Ovary (tissue), 10 donors: ENCODE measurements at regions of chr7 and their contacts with region 1.

Region 1: DNA sequence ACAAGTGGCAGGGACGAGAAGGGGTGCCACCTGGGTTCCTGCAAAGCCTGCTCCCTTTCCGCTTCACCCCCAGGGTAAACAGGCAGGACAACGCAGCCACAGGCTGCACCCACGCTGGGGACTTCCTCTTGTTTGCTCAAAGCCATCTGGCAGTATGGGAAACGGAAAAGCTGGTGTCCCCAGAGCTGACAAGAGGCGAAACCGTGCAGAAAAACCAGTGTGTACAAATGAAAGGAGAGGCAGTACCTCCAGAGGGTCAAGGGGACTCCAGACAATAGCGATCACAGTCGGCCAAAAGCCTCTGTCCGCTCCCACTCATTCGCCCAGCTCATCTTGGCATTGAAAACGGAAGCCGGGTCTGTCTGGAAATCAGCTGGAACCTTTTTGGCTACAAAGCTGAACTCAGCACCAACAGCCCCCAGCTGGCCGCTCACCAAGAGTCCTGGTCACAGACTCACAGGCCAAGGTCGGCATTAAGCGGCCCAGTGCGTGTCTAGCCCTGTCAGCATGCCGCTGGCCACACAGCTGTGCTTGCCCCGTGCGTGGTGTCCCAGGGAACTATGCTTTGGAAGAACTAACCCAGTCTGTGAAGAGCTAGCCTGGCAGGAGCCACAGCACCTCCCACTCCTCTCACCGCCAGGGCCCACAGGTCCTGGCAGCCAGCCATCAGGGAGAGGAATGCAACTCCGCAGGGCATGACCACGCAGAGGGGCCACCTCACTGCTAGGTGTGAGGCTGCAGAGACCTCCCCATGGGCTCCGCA is 10.4 kb downstream of the TNS3 start:
- DNase-seq: peak; percentile 70 to 87 (median 81)
- H3K4me3 ChIP-seq: peak overlapping the region; percentile 22
- H3K27ac ChIP-seq: peak overlapping the region; percentile 72 to 77
- H3K4me1 ChIP-seq: peaks cover 52% of the 10 kb centered on the region
- H3K27me3 ChIP-seq: no peaks in the 10 kb centered on the region
- CTCF ChIP-seq: no peak
- EP300 ChIP-seq: no peak
- POLR2A ChIP-seq: no peak

Region 2: DNA sequence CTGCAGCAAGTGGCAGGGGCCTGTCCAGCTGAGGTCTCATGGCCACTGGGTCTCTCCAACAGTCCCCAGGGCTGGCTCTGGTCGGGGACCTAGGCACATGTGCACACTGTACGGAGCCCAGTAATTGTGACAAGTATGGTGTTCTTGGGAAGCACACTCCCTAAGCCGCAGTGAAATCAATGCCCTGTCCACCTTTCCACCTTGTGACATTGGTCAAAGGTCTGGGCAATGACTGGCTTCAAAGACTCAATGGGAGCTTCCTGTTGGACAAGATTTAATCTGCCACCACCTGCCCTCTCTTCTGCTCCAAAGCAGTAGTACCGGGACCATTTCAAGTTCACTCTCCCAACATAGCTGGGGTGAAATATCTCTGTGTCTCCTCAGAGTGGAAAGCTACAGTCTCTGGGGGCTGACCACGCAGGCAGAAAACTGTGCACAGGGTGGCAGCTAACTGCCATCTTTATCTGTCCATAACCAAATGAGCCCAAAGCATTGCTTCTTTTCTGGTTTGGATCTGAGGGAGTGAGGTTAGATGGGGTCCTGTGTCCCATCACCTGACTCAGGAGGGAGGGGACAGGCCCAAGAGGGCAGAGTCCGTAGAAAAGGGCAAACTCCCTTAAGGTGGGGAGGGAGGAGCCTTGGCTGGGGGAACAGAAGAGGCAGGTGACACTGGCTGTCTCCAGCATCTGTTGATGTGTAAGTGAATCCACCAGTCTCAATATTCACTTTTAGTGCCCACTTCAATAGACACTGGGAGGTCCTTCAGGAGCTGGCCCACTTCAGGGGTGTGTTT is 297.3 kb before region 1 on chr7:
- intact Hi-C with region 1: loop called in 1 of 4 experiments (anchors 10 kb)
- DNase-seq: no peak
- H3K4me3 ChIP-seq: no peak overlapping the region
- H3K27ac ChIP-seq: no peak overlapping the region
- H3K4me1 ChIP-seq: no peaks in the 10 kb centered on the region
- H3K27me3 ChIP-seq: no peaks in the 10 kb centered on the region
- CTCF ChIP-seq: no peak
- EP300 ChIP-seq: no peak
- POLR2A ChIP-seq: no peak

Region 3: GRCh38 chr7:47392231-47392759 is 179.2 kb before region 1 on chr7:
- intact Hi-C with region 1: loop called in 1 of 4 experiments (anchors 10 kb)
- DNase-seq: peak; percentile 94 to 99 (median 97)
- H3K4me3 ChIP-seq: no peak overlapping the region
- H3K27ac ChIP-seq: peak overlapping the region in 1 of 2 donors; percentile 72
- H3K4me1 ChIP-seq: peaks cover 12% of the 10 kb centered on the region
- H3K27me3 ChIP-seq: no peaks in the 10 kb centered on the region
- CTCF ChIP-seq: peak; percentile 74 to 85 (median 81)
- EP300 ChIP-seq: no peak
- POLR2A ChIP-seq: no peak

Region 4: GRCh38 chr7:47474937-47475878 is 96.3 kb before region 1 on chr7:
- intact Hi-C with region 1: loop called in 1 of 4 experiments (anchors 10 kb)
- DNase-seq: peak; percentile 88 to 95 (median 92)
- H3K4me3 ChIP-seq: no peak overlapping the region
- H3K27ac ChIP-seq: peak overlapping the region; percentile 65 to 66
- H3K4me1 ChIP-seq: peaks cover 43% of the 10 kb centered on the region
- H3K27me3 ChIP-seq: no peaks in the 10 kb centered on the region
- CTCF ChIP-seq: peak in 2 of 3 donors; percentile 45 to 52
- EP300 ChIP-seq: no peak
- POLR2A ChIP-seq: peak; percentile 38

Region 5: DNA sequence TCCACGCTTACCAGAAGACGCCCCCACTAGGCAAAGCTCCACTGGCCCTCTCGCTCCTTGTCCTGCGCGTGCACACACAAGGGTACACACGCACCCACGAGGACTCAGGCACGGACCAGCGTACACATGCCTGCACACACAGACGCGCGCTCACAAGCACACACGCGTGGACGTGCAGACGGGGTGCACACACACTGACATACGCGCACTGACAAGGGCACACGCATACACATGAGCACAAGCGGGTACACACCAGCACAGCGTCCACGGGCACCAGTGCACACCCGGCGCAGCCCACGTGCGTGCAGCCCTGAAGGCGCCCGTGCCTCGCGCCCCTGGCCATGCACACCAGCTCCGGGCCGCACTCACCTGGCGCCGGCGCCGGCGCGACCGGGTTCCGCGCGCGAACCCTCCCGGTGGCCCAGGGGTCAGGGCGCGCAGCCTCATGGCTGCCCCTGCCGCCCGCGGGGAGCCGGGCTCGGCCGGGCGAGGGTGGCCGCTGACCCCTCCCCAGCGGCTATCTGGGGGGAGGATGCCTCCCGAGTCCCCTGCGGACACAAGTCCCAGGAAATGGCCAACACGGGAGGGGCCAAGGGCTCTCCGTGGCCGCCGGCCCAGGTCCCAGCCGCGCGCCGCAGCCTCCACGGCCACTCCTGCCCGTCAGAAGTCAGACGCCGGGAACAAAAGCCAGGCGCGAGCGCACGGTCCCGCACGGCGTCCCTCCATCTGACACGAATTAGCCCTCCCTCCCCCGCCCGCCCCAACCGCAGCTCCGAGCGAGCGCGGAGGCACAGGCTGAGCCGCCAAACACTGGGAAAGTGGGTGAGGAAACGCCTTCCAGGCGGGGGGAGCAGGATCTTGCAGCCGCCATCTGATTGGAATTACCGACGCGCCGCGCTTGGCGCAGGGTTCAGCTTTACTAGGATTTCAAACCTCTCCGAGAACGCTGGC is 34.6 kb before region 1 on chr7:
- intact Hi-C with region 1: loop called in 1 of 4 experiments (anchors 5 kb)
- DNase-seq: peak; percentile 65 to 80 (median 73)
- H3K4me3 ChIP-seq: peak overlapping the region; percentile 67
- H3K27ac ChIP-seq: no peak overlapping the region
- H3K4me1 ChIP-seq: peaks cover 24% of the 10 kb centered on the region
- H3K27me3 ChIP-seq: no peaks in the 10 kb centered on the region
- CTCF ChIP-seq: no peak
- EP300 ChIP-seq: no peak
- POLR2A ChIP-seq: no peak

Region 6: DNA sequence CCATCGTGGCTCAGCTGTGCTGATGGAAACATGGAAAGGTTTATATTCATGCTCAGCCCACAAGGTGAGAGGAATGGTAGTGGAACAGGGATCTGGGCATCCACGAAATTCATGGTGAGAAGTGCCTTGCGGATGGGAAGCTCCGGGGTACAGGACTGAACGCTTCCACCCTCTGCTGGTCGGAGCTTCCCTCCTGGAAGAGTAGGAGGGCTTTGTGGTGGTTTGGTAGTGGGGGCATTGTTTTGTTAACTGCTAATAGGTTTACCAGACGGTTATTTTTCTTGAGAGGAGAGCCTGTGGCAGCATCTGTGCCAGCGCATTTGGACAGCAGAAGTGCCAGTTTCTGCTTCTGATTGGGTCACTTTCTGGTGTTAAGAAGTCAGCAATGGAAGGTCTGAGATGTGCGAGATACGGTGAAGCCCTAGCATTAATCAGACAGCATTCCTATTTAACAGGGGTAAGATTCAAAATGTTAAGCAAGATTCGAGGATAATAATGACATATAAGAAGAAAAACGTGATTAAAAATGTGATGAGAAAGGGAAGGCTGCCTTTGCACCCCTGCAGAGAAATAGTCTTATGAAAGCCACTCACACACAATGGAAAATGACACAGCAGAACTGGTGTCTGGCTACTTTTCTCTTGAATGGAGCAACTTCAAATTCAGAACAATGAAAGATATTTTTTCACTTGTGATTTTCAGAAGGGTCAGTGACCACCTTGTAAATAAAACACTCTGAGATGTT is 617.4 kb after region 1 on chr7:
- intact Hi-C with region 1: no loop called
- DNase-seq: no peak
- H3K4me3 ChIP-seq: no peak overlapping the region
- H3K27ac ChIP-seq: no peak overlapping the region
- H3K4me1 ChIP-seq: no peaks in the 10 kb centered on the region
- H3K27me3 ChIP-seq: no peaks in the 10 kb centered on the region
- CTCF ChIP-seq: no peak
- EP300 ChIP-seq: no peak
- POLR2A ChIP-seq: no peak